ENCODE measurements at regions of chr22 and their contacts with region 1.

Region 1: GRCh38 chr22:34490886-34491285 is 570.6 kb upstream of the LARGE1 start:
- DNase-seq: no peak
- H3K4me3 ChIP-seq: no peak overlapping the region
- H3K27ac ChIP-seq: no peak overlapping the region
- H3K4me1 ChIP-seq: no peaks in the 10 kb centered on the region
- H3K27me3 ChIP-seq: no peaks in the 10 kb centered on the region
- CTCF ChIP-seq: no peak
- POLR2A ChIP-seq: no peak

Region 2: GRCh38 chr22:34294991-34295390 is 195.9 kb before region 1 on chr22:
- intact Hi-C with region 1: no loop called
- DNase-seq: no peak
- H3K4me3 ChIP-seq: no peak overlapping the region
- H3K27ac ChIP-seq: no peak overlapping the region
- H3K4me1 ChIP-seq: no peaks in the 10 kb centered on the region
- H3K27me3 ChIP-seq: no peaks in the 10 kb centered on the region
- CTCF ChIP-seq: no peak
- POLR2A ChIP-seq: no peak

Region 3: GRCh38 chr22:34437140-34437539 is 53.7 kb before region 1 on chr22:
- intact Hi-C with region 1: loop called (anchors 10 kb)
- DNase-seq: no peak
- H3K4me3 ChIP-seq: no peak overlapping the region
- H3K27ac ChIP-seq: no peak overlapping the region
- H3K4me1 ChIP-seq: no peaks in the 10 kb centered on the region
- H3K27me3 ChIP-seq: no peaks in the 10 kb centered on the region
- CTCF ChIP-seq: no peak
- POLR2A ChIP-seq: no peak

Region 4: DNA sequence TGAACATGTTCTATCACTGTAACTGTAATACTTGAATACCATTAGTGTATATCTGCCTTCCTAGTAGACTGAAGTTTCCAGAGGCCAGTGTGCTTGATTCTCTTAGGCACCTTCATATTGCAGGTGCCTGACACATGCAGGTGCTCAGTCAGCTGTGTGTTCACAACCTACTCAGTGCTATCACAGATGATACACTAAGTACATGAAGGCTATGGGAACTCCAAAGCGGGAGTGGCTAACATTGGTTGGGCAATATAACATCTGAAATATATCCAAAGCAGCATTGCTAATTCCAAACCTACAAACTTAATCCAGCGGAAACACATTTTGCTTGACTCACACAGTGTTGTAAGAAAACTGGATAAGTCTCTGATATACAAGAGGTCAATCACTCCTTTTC is 35.8 kb after region 1 on chr22:
- intact Hi-C with region 1: no loop called
- DNase-seq: no peak
- H3K4me3 ChIP-seq: no peak overlapping the region
- H3K27ac ChIP-seq: no peak overlapping the region
- H3K4me1 ChIP-seq: no peaks in the 10 kb centered on the region
- H3K27me3 ChIP-seq: no peaks in the 10 kb centered on the region
- CTCF ChIP-seq: no peak
- POLR2A ChIP-seq: no peak

Region 5: DNA sequence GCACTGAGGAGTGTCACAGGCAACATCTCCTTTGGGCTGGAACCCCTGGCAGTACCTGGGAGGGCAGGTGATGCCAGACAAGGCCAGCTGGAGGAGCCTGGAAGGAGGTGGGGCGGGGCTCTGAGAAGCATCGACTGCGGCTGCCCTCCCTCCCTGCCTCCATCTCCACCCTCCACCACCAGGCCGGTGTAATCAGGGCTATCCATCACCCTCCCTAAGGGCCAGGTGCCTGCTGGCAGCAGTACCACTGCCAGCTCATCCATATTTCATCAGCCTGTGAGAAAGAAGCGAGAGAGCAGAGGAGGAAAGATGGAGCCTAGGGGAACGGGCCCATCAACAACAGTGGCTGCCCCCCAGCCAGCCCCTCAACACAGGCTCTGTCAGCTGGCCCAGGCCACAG is 998.4 kb after region 1 on chr22:
- intact Hi-C with region 1: no loop called
- DNase-seq: no peak
- H3K4me3 ChIP-seq: no peak overlapping the region
- H3K27ac ChIP-seq: no peak overlapping the region
- H3K4me1 ChIP-seq: peaks cover 10% of the 10 kb centered on the region in 2 donors
- H3K27me3 ChIP-seq: no peaks in the 10 kb centered on the region
- CTCF ChIP-seq: no peak
- POLR2A ChIP-seq: no peak